ENCODE measurements at regions of chr3 and their contacts with region 1.

Region 1: DNA sequence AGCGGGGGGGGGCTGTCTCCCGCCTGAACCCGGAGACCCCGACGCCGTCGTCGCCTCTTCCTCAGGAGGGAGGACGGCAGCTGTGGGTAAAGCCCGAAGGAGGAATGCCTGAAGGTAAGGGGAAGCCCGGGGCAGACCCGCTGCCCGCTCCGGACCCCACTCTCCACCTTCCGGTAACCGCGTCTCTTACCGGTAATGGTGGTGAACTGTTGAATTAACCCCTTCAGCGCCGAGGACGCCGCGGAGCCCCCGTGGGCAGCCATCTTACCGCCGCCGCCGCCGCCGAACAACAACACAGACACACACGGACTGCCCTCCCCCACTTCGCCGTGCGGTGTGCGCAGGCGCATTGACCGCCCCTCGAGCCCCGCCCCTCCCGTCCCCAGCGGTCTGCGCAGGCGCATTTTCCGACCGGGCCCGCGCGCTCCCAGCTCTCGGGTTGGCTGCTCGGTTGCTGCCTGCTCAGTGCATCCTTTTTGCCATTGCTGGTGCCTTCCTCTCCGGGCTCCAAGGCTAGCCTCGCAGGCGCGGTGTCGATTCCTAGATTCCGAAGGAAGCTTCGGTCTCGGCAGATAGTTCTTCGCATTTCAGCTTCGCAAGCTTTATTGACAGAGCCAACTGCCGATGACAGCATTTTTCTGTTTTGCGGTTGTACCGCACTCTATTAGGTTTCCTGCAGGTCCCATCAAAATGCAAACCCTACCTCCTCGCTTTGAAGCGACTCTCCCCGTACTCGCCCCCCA is at the start of gene UBXN7:
- DNase-seq: peak; percentile 92 to 96 (median 95)
- H3K4me3 ChIP-seq: peak within 1 kb of the TSS; percentile 64 to 95
- H3K4me3 Mint-ChIP-seq: peak within 1 kb of the TSS; percentile 70 to 97 (median 85)
- H3K27ac ChIP-seq: peak within 1 kb of the TSS; percentile 81
- H3K27ac Mint-ChIP-seq: peak within 1 kb of the TSS; percentile 80 to 97 (median 96)
- H3K4me1 ChIP-seq: peaks cover 22% of the 10 kb centered on the region
- H3K4me1 Mint-ChIP-seq: peaks cover 8 to 35% (median 15%) of the 10 kb centered on the region in 4 donors
- H3K27me3 ChIP-seq: no peaks in the 10 kb centered on the region
- H3K27me3 Mint-ChIP-seq: no peaks in the 10 kb centered on the region
- total RNA-seq, gene UBXN7: 72.6 to 90.8 TPM

Region 2: GRCh38 chr3:196471551-196471950 is 39.2 kb after region 1 on chr3:
- CTCF ChIA-PET with region 1: interaction called, 3 read pairs
- POLR2A ChIA-PET with region 1: interaction called, 3 read pairs
- intact Hi-C with region 1: loop called (anchors 5 kb)
- DNase-seq: no peak
- H3K4me3 ChIP-seq: no peak overlapping the region
- H3K4me3 Mint-ChIP-seq: no peak overlapping the region
- H3K27ac ChIP-seq: no peak overlapping the region
- H3K27ac Mint-ChIP-seq: peak overlapping the region in 1 of 7 donors; percentile 19
- H3K4me1 ChIP-seq: peaks cover 6% of the 10 kb centered on the region
- H3K4me1 Mint-ChIP-seq: peaks cover 8 to 23% (median 9%) of the 10 kb centered on the region in 4 donors
- H3K27me3 ChIP-seq: no peaks in the 10 kb centered on the region
- H3K27me3 Mint-ChIP-seq: no peaks in the 10 kb centered on the region

Region 3: GRCh38 chr3:196502775-196503195 is 70.5 kb after region 1 on chr3:
- CTCF ChIA-PET with region 1: no interaction called
- POLR2A ChIA-PET with region 1: interaction called, 17 read pairs
- intact Hi-C with region 1: loop called (anchors 1 kb)
- DNase-seq: peak; percentile 70 to 87 (median 73)
- H3K4me3 ChIP-seq: peak overlapping the region; percentile 70 to 79
- H3K4me3 Mint-ChIP-seq: peak overlapping the region; percentile 97 to 100 (median 98)
- H3K27ac ChIP-seq: peak overlapping the region; percentile 81
- H3K27ac Mint-ChIP-seq: peak overlapping the region; percentile 94 to 99 (median 97)
- H3K4me1 ChIP-seq: peaks cover 27% of the 10 kb centered on the region
- H3K4me1 Mint-ChIP-seq: peaks cover 25 to 56% (median 38%) of the 10 kb centered on the region in 4 donors
- H3K27me3 ChIP-seq: no peaks in the 10 kb centered on the region
- H3K27me3 Mint-ChIP-seq: no peaks in the 10 kb centered on the region

Region 4: GRCh38 chr3:196711838-196712513 is 279.7 kb after region 1 on chr3 and contains the starts of genes CEP19 and PIGX:
- CTCF ChIA-PET with region 1: interaction called, 3 read pairs
- POLR2A ChIA-PET with region 1: no interaction called
- intact Hi-C with region 1: loop called (anchors 1 kb)
- DNase-seq: peak; percentile 93 to 98 (median 96)
- H3K4me3 ChIP-seq: peak within 1 kb of the TSS; percentile 68 to 87
- H3K4me3 Mint-ChIP-seq: peak within 1 kb of the TSS; percentile 85 to 98 (median 96)
- H3K27ac ChIP-seq: peak within 1 kb of the TSS; percentile 99
- H3K27ac Mint-ChIP-seq: peak within 1 kb of the TSS; percentile 93 to 100 (median 99)
- H3K4me1 ChIP-seq: peaks cover 21% of the 10 kb centered on the region
- H3K4me1 Mint-ChIP-seq: peaks cover 12 to 33% (median 24%) of the 10 kb centered on the region in 4 donors
- H3K27me3 ChIP-seq: no peaks in the 10 kb centered on the region
- H3K27me3 Mint-ChIP-seq: no peaks in the 10 kb centered on the region
- total RNA-seq, gene CEP19: 7.8 to 8.2 TPM
- total RNA-seq, gene PIGX: 19.1 to 23.7 TPM

Measured in CD4-positive, alpha-beta memory T cell (primary cell).